Heart left ventricle (tissue), 16 donors: ENCODE measurements at regions of chr20 and their contacts with region 1.

Region 1: GRCh38 chr20:11274141-11274594 is 600.4 kb upstream of the JAG1 start:
- DNase-seq: peak in 3 of 5 donors; percentile 35 to 44 (median 35)
- ATAC-seq: peak; percentile 61 to 91 (median 90)
- H3K4me3 ChIP-seq: no peak overlapping the region
- H3K27ac ChIP-seq: no peak overlapping the region
- H3K4me1 ChIP-seq: peaks cover 0 to 10% (median 2%) of the 10 kb centered on the region in 12 donors
- H3K27me3 ChIP-seq: no peaks in the 10 kb centered on the region
- CTCF ChIP-seq: peak; percentile 40 to 84 (median 72)
- POLR2A ChIP-seq: no peak

Region 2: GRCh38 chr20:10469599-10469998 is 804.6 kb before region 1 on chr20:
- intact Hi-C with region 1: loop called in 9 of 10 experiments (anchors 5 to 10 kb)
- DNase-seq: peak in 3 of 5 donors; percentile 43 to 48 (median 44)
- ATAC-seq: peak; percentile 72 to 82 (median 80)
- H3K4me3 ChIP-seq: no peak overlapping the region
- H3K27ac ChIP-seq: peak overlapping the region in 1 of 12 donors; percentile 50
- H3K4me1 ChIP-seq: peaks cover 0 to 62% (median 34%) of the 10 kb centered on the region in 12 donors
- H3K27me3 ChIP-seq: no peaks in the 10 kb centered on the region
- CTCF ChIP-seq: peak; percentile 49 to 80 (median 68)
- POLR2A ChIP-seq: no peak

Region 3: DNA sequence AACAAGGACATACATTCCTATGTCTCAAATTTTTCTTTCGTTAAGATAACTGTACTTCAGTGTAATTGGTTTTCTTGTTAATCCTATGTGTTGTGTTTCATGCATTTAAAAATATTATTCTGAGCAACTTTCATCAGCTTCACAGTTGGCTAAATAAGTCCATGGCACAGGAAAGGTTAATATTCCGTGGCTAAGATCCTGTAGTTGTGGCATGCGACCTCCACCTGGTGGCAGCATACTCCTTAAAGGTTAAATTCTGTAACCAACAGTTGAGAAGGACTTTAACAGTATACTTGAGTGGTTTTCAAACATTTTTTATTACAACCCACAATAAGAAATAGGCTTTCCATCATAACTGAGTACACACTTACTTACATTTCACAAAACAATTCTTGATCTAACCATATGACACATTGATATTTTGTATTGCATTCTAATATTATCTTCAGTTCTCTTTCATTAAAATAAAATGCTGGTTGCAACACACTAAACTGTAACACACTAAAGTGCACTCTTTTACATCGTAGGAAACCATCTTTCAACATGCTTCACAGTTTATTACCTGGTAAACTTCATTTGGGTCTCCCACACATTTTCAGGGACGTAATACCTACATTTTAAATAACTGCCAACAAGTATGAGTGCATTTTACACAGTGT is 720.7 kb before region 1 on chr20:
- intact Hi-C with region 1: loop called (anchors 2 to 5 kb)
- DNase-seq: peak; percentile 42 to 76 (median 60)
- ATAC-seq: peak; percentile 61 to 83 (median 66)
- H3K4me3 ChIP-seq: no peak overlapping the region
- H3K27ac ChIP-seq: no peak overlapping the region
- H3K4me1 ChIP-seq: peaks cover 0 to 43% (median 0%) of the 10 kb centered on the region in 12 donors
- H3K27me3 ChIP-seq: no peaks in the 10 kb centered on the region
- CTCF ChIP-seq: peak; percentile 68 to 89 (median 84)
- POLR2A ChIP-seq: no peak

Region 4: GRCh38 chr20:10611357-10611756 is 662.8 kb before region 1 on chr20:
- intact Hi-C with region 1: loop called in 2 of 10 experiments (anchors 1 to 5 kb)
- DNase-seq: peak; percentile 58 to 72 (median 69)
- ATAC-seq: peak in 3 of 4 donors; percentile 65 to 72 (median 66)
- H3K4me3 ChIP-seq: no peak overlapping the region
- H3K27ac ChIP-seq: peak overlapping the region in 6 of 12 donors; percentile 22 to 92 (median 74)
- H3K4me1 ChIP-seq: peaks cover 0 to 32% (median 6%) of the 10 kb centered on the region in 12 donors
- H3K27me3 ChIP-seq: no peaks in the 10 kb centered on the region
- CTCF ChIP-seq: peak; percentile 32 to 69 (median 50)
- POLR2A ChIP-seq: no peak

Region 5: DNA sequence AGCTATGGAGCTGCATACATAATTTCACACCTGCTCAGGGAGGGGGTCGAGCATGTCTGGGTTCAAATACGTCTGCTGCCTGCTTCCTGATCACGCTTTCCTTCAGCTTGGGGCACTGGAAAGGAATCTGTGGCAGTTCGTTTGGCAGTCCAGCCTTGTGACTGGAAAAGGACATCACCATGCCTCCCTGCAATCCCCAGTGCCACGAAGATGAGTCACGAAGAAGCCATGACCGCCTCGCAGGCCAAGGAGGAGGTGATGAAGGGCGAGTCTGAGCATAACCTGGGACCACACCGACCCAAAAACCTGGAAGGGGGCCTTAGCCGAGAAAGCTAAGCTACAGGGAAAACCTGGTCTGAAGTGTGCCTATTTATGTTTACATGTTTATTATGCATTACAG is 613.5 kb before region 1 on chr20:
- intact Hi-C with region 1: loop called in 2 of 10 experiments (anchors 5 to 10 kb)
- DNase-seq: peak in 2 of 5 donors; percentile 18 to 48
- ATAC-seq: peak in 3 of 4 donors; percentile 50 to 77 (median 66)
- H3K4me3 ChIP-seq: no peak overlapping the region
- H3K27ac ChIP-seq: peak overlapping the region in 9 of 12 donors; percentile 6 to 74 (median 52)
- H3K4me1 ChIP-seq: peaks cover 3 to 95% (median 62%) of the 10 kb centered on the region in 12 donors
- H3K27me3 ChIP-seq: no peaks in the 10 kb centered on the region
- CTCF ChIP-seq: no peak
- POLR2A ChIP-seq: no peak

Region 6: DNA sequence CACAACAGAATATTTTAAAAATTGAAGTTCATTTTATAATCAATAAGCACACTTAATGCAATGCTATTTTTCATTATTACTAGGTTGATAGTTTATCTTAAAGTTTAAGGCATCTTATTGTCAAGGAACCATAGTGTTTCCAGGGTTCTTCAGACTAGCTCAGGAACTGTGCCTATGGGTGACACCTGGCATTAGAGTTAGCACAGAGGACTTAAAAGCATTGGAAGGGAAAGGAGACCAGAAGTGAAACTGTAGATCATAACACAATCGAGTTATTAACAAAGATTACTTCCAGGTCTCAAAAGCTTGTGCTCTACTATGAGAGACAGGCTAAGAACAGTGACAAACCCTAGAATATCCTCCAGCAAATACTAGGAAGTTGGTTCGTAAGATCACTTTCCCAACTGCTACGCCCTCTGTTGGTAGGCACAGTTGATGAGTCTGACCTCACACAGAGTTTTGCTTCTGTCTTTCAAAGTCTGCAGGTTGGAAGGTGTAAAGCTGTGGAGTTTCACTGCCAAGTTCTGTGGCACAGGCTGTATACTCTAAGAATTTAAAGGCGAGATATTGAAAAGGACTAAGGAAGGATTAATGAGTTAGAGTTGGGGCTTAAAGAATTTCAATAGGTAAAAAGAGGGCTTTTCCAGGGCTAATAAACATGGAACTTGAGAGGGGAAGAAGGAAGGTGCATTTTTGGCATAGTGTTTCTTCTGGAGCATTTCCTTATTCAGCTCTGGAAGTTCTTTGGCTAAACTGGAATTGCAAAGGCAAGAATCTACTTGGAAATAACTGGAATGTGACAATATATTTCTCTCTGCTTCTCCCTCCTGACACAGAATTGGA is 69.0 kb before region 1 on chr20:
- intact Hi-C with region 1: loop called in 5 of 10 experiments (anchors 5 to 10 kb)
- DNase-seq: peak in 4 of 5 donors; percentile 56 to 72 (median 68)
- ATAC-seq: peak; percentile 82 to 95 (median 93)
- H3K4me3 ChIP-seq: no peak overlapping the region
- H3K27ac ChIP-seq: peak overlapping the region in 5 of 12 donors; percentile 15 to 46 (median 39)
- H3K4me1 ChIP-seq: peaks cover 0 to 17% (median 7%) of the 10 kb centered on the region in 12 donors
- H3K27me3 ChIP-seq: no peaks in the 10 kb centered on the region
- CTCF ChIP-seq: peak; percentile 65 to 91 (median 83)
- POLR2A ChIP-seq: no peak